ENCODE measurements at regions of chr5 and their contacts with region 1.

Region 1: DNA sequence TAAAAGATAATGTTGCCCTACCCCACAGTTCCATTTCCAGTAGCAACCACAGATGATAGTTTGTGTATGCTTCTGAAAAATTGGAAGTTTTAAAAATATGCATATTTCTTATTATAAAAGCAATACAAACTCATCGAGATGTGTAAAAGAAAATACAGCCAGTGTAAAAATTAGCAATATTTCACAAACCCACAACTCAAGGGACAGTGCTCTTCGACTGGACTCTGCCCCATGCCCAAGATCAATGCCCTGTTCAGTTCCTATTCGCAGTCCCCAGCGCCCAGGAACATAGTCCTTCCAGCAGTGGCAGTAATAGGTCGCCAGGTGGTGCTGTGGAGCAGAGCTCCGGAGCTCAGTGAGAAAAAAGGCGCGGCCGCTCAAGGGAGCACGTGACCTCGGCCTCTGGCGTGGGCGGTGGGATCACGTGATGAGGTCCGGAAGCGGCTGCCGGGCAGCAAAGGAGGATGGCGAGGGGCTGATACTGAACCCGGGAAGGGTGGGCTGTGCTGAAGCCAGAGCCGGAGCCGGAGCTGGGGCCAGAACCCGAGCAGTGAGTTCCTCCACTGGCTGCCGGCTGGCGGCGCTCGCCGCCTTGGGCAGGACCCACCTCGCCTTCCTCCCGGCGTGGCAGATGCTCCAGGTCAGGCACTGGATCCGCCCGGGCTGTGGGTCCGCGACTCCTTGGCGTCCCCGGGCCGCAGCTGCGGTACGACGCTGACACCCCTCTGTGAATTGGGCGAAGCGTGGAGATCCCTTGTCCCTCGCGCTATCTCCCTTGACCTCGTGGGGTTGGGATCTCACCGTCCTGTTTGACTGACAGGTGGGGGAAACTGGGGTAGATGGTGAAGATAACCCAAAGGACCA is at the start of gene SLC36A1:
- DNase-seq: peak; percentile 95
- ATAC-seq: peak; percentile 95
- H3K4me3 Mint-ChIP-seq: peak within 1 kb of the TSS; percentile 82
- H3K27ac Mint-ChIP-seq: peak within 1 kb of the TSS; percentile 79
- H3K4me1 Mint-ChIP-seq: peaks cover 23% of the 10 kb centered on the region
- H3K27me3 Mint-ChIP-seq: peaks cover 36% of the 10 kb centered on the region
- total RNA-seq, gene SLC36A1: 6.4 to 6.7 TPM

Region 2: GRCh38 chr5:151384106-151384505 is 63.3 kb before region 1 on chr5:
- CTCF ChIA-PET with region 1: no interaction called
- DNase-seq: no peak
- ATAC-seq: no peak
- H3K4me3 Mint-ChIP-seq: no peak overlapping the region
- H3K27ac Mint-ChIP-seq: no peak overlapping the region
- H3K4me1 Mint-ChIP-seq: no peaks in the 10 kb centered on the region
- H3K27me3 Mint-ChIP-seq: peaks cover 17% of the 10 kb centered on the region

Region 3: GRCh38 chr5:151483647-151484046 is 36.2 kb after region 1 on chr5:
- CTCF ChIA-PET with region 1: interaction called, 11 read pairs
- DNase-seq: no peak
- ATAC-seq: no peak
- H3K4me3 Mint-ChIP-seq: no peak overlapping the region
- H3K27ac Mint-ChIP-seq: no peak overlapping the region
- H3K4me1 Mint-ChIP-seq: peaks cover 3% of the 10 kb centered on the region
- H3K27me3 Mint-ChIP-seq: no peaks in the 10 kb centered on the region

Region 4: GRCh38 chr5:151523335-151523734 is 75.9 kb after region 1 on chr5:
- CTCF ChIA-PET with region 1: interaction called, 14 read pairs
- DNase-seq: peak; percentile 58
- ATAC-seq: peak; percentile 82
- H3K4me3 Mint-ChIP-seq: no peak overlapping the region
- H3K27ac Mint-ChIP-seq: no peak overlapping the region
- H3K4me1 Mint-ChIP-seq: no peaks in the 10 kb centered on the region
- H3K27me3 Mint-ChIP-seq: peaks cover 4% of the 10 kb centered on the region

Region 5: GRCh38 chr5:151659001-151659754 is 211.8 kb after region 1 on chr5:
- CTCF ChIA-PET with region 1: interaction called, 37 read pairs
- DNase-seq: peak; percentile 85
- ATAC-seq: peak; percentile 97
- H3K4me3 Mint-ChIP-seq: no peak overlapping the region
- H3K27ac Mint-ChIP-seq: no peak overlapping the region
- H3K4me1 Mint-ChIP-seq: peaks cover 13% of the 10 kb centered on the region
- H3K27me3 Mint-ChIP-seq: peaks cover 29% of the 10 kb centered on the region

Measured in activated CD8-positive, alpha-beta memory T cell treated with anti-CD3 and anti-CD28 coated beads, Interleukin-2, amount 10 ng/mL, durations not matched to agents 7 days and 5 days (primary cell).